Activated B cell treated with CpG ODN at 0.5 μM for 24 hours (primary cell): ENCODE measurements at regions of chr7 and their contacts with region 1.

Region 1: GRCh38 chr7:44460325-44460724 is 30.1 kb downstream of the NUDCD3 start:
- DNase-seq: no peak
- ATAC-seq: peak; percentile 99
- H3K4me3 Mint-ChIP-seq: peak overlapping the region; percentile 59
- H3K27ac Mint-ChIP-seq: peak overlapping the region; percentile 13
- H3K4me1 Mint-ChIP-seq: peaks cover 48% of the 10 kb centered on the region
- H3K27me3 Mint-ChIP-seq: no peaks in the 10 kb centered on the region
- CTCF ChIP-seq: no peak

Region 2: GRCh38 chr7:44338600-44338999 is 121.7 kb before region 1 on chr7:
- CTCF ChIA-PET with region 1: no interaction called
- POLR2A ChIA-PET with region 1: no interaction called
- intact Hi-C with region 1: loop called (anchors 2 kb)
- DNase-seq: no peak
- ATAC-seq: peak; percentile 94
- H3K4me3 Mint-ChIP-seq: peak overlapping the region; percentile 64
- H3K27ac Mint-ChIP-seq: peak overlapping the region; percentile 70
- H3K4me1 Mint-ChIP-seq: peaks cover 18% of the 10 kb centered on the region
- H3K27me3 Mint-ChIP-seq: no peaks in the 10 kb centered on the region
- CTCF ChIP-seq: no peak

Region 3: GRCh38 chr7:44449584-44449928 is 10.8 kb before region 1 on chr7:
- CTCF ChIA-PET with region 1: no interaction called
- POLR2A ChIA-PET with region 1: no interaction called
- intact Hi-C with region 1: loop called (anchors 1 kb)
- DNase-seq: no peak
- ATAC-seq: peak; percentile 34
- H3K4me3 Mint-ChIP-seq: peak overlapping the region; percentile 39
- H3K27ac Mint-ChIP-seq: peak overlapping the region; percentile 21
- H3K4me1 Mint-ChIP-seq: peaks cover 46% of the 10 kb centered on the region
- H3K27me3 Mint-ChIP-seq: no peaks in the 10 kb centered on the region
- CTCF ChIP-seq: no peak